Mammary epithelial cell (primary cell): ENCODE measurements at regions of chr11 and their contacts with region 1.

Region 1: GRCh38 chr11:10792398-10792975 is 16.2 kb downstream of the EIF4G2 start:
- DNase-seq: peak; percentile 59
- H3K4me3 ChIP-seq: peak overlapping the region in 1 of 3 experiments; percentile 17
- H3K27ac ChIP-seq: no peak overlapping the region
- H3K4me1 ChIP-seq: peaks cover 7% of the 10 kb centered on the region
- H3K27me3 ChIP-seq: no peaks in the 10 kb centered on the region
- CTCF ChIP-seq: peak; percentile 87 to 95

Region 2: GRCh38 chr11:10808553-10809372 is 16.3 kb after region 1 on chr11 and contains the start of gene EIF4G2:
- CTCF ChIA-PET with region 1: interaction called, 6 read pairs
- dilution Hi-C with region 1: no loop called
- in situ Hi-C with region 1: no loop called
- intact Hi-C with region 1: loop called (anchors 1 kb)
- DNase-seq: peak; percentile 99
- H3K4me3 ChIP-seq: peak within 1 kb of the TSS; percentile 64 to 89 (median 86)
- H3K27ac ChIP-seq: peak within 1 kb of the TSS; percentile 83
- H3K4me1 ChIP-seq: peaks cover 23% of the 10 kb centered on the region
- H3K27me3 ChIP-seq: no peaks in the 10 kb centered on the region
- CTCF ChIP-seq: no peak
- total RNA-seq, gene EIF4G2: 737 to 956 TPM

Region 3: GRCh38 chr11:10866893-10867331 is 74.4 kb after region 1 on chr11:
- CTCF ChIA-PET with region 1: no interaction called
- dilution Hi-C with region 1: no loop called
- in situ Hi-C with region 1: no loop called
- intact Hi-C with region 1: no loop called
- DNase-seq: no peak
- H3K4me3 ChIP-seq: no peak overlapping the region
- H3K27ac ChIP-seq: no peak overlapping the region
- H3K4me1 ChIP-seq: no peaks in the 10 kb centered on the region
- H3K27me3 ChIP-seq: no peaks in the 10 kb centered on the region
- CTCF ChIP-seq: no peak

Region 4: GRCh38 chr11:10899121-10899830 is 106.8 kb after region 1 on chr11:
- CTCF ChIA-PET with region 1: interaction called, 3 read pairs
- dilution Hi-C with region 1: no loop called
- in situ Hi-C with region 1: no loop called
- intact Hi-C with region 1: loop called (anchors 1 kb)
- DNase-seq: peak; percentile 99
- H3K4me3 ChIP-seq: peak overlapping the region in 2 of 3 experiments; percentile 1 to 19
- H3K27ac ChIP-seq: peak overlapping the region; percentile 96
- H3K4me1 ChIP-seq: peaks cover 38% of the 10 kb centered on the region
- H3K27me3 ChIP-seq: no peaks in the 10 kb centered on the region
- CTCF ChIP-seq: no peak

Region 5: DNA sequence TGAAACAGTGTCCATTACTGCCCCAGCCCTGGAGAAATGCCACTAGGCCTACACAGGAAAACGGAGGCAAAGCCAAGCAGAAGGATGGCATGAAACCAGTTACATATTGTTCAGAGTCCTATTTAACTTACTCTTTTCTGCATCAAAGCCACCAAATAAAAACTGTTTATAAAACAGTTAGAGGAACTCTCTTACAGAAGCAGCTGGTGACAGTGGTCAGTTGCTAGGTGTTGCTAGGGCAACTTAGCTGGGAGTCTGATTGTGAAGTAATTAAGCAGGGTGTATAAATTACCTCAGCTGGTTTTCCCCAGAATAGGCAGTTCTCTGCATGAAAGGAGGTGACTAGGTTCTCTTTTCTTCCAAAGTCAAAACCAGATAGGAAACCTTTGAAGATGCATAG is 180.9 kb after region 1 on chr11:
- CTCF ChIA-PET with region 1: interaction called, 29 read pairs
- dilution Hi-C with region 1: no loop called
- in situ Hi-C with region 1: no loop called
- intact Hi-C with region 1: no loop called
- DNase-seq: no peak
- H3K4me3 ChIP-seq: no peak overlapping the region
- H3K27ac ChIP-seq: no peak overlapping the region
- H3K4me1 ChIP-seq: no peaks in the 10 kb centered on the region
- H3K27me3 ChIP-seq: no peaks in the 10 kb centered on the region
- CTCF ChIP-seq: no peak

Region 6: GRCh38 chr11:11022125-11022730 is 229.7 kb after region 1 on chr11:
- CTCF ChIA-PET with region 1: interaction called, 6 read pairs
- dilution Hi-C with region 1: loop called (anchors 10 kb)
- in situ Hi-C with region 1: loop called (anchors 5 kb)
- intact Hi-C with region 1: loop called (anchors 1 kb)
- DNase-seq: no peak
- H3K4me3 ChIP-seq: no peak overlapping the region
- H3K27ac ChIP-seq: no peak overlapping the region
- H3K4me1 ChIP-seq: peaks cover 12% of the 10 kb centered on the region
- H3K27me3 ChIP-seq: no peaks in the 10 kb centered on the region
- CTCF ChIP-seq: peak; percentile 39 to 46